ENCODE measurements at regions of chr2 and their contacts with region 1.

Region 1: GRCh38 chr2:158213773-158214172 is 112.1 kb downstream of the UPP2 start:
- DNase-seq: no peak
- ATAC-seq: no peak
- H3K4me3 ChIP-seq: no peak overlapping the region
- H3K27ac ChIP-seq: no peak overlapping the region
- H3K4me1 ChIP-seq: no peaks in the 10 kb centered on the region
- H3K27me3 ChIP-seq: no peaks in the 10 kb centered on the region; a peak in 1 of 4 replicates
- CTCF ChIP-seq: no peak
- EP300 ChIP-seq: no peak
- POLR2A ChIP-seq: no peak
- RAD21 ChIP-seq: no peak

Region 2: DNA sequence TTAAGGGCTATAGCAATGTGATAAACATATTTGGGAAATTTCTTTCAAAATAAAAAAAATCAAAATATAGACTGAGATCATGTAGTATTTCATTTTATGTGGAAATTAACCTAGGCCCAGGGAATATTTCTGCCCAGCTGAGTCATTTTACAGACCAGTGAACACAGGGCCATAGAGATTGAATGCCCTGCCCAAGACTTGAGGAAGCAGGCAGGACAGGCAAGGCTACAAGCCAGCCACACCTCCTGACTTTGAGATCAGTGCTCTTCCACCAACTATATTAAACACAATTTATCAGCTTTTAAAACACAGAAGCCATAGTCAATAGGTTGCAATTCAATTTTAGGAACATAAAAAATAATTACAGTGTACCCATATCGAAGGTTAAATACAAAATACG is 229.8 kb after region 1 on chr2:
- CTCF ChIA-PET with region 1: no interaction called
- POLR2A ChIA-PET with region 1: interaction called, 14 read pairs
- RAD21 ChIA-PET with region 1: no interaction called
- SMC1A ChIA-PET with region 1: no interaction called
- in situ Hi-C with region 1: no loop called
- intact Hi-C with region 1: no loop called
- DNase-seq: no peak
- ATAC-seq: no peak
- H3K4me3 ChIP-seq: no peak overlapping the region
- H3K27ac ChIP-seq: no peak overlapping the region
- H3K4me1 ChIP-seq: no peaks in the 10 kb centered on the region
- H3K27me3 ChIP-seq: no peaks in the 10 kb centered on the region
- CTCF ChIP-seq: no peak
- EP300 ChIP-seq: no peak
- POLR2A ChIP-seq: no peak
- RAD21 ChIP-seq: no peak

Region 3: GRCh38 chr2:158600155-158600802 is 386.5 kb after region 1 on chr2:
- CTCF ChIA-PET with region 1: no interaction called
- POLR2A ChIA-PET with region 1: no interaction called
- RAD21 ChIA-PET with region 1: no interaction called
- SMC1A ChIA-PET with region 1: no interaction called
- in situ Hi-C with region 1: no loop called
- intact Hi-C with region 1: no loop called
- DNase-seq: no peak
- ATAC-seq: no peak
- H3K4me3 ChIP-seq: no peak overlapping the region
- H3K27ac ChIP-seq: no peak overlapping the region
- H3K4me1 ChIP-seq: no peaks in the 10 kb centered on the region
- H3K27me3 ChIP-seq: no peaks in the 10 kb centered on the region
- CTCF ChIP-seq: no peak
- EP300 ChIP-seq: no peak
- POLR2A ChIP-seq: no peak
- RAD21 ChIP-seq: no peak